ENCODE measurements at regions of chr4 and their contacts with region 1.

Region 1: GRCh38 chr4:108834835-108835384 is 72.1 kb upstream of the ETNPPL start:
- DNase-seq: no peak
- H3K4me3 Mint-ChIP-seq: no peak overlapping the region
- H3K27ac Mint-ChIP-seq: no peak overlapping the region
- H3K4me1 Mint-ChIP-seq: no peaks in the 10 kb centered on the region
- H3K27me3 Mint-ChIP-seq: no peaks in the 10 kb centered on the region
- CTCF ChIP-seq: no peak

Region 2: DNA sequence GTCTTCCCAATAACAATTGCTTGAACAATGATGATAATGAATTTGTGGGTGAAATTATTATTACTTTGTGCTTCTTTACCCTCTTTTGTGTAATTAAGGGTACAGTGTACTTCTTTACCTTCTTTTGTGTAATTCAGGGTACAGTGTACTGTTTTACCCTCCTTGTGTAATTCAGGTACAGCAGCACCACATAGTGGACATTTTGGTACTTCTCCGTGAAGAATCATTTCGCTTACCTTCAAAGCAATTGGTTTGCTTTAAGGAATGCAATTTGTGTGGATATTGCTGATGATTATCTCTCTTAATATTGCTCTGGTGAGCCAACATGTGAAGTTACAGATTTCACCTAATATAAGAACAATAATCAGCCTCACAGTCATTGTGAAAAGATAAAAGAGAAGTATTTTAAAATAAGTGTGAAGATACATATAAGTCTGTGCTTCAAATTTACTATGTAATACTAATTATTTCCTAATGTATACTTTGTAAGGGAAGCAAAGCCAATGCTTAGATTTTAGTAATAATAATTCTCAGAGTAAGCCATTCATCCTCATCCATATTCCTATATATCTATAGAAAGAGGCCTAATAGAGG is 571.5 kb after region 1 on chr4:
- CTCF ChIA-PET with region 1: no interaction called
- intact Hi-C with region 1: loop called (anchors 2 kb)
- DNase-seq: peak; percentile 32
- H3K4me3 Mint-ChIP-seq: no peak overlapping the region
- H3K27ac Mint-ChIP-seq: no peak overlapping the region
- H3K4me1 Mint-ChIP-seq: peaks cover 8% of the 10 kb centered on the region
- H3K27me3 Mint-ChIP-seq: no peaks in the 10 kb centered on the region
- CTCF ChIP-seq: peak; percentile 31